SK-N-SH (cell line): ENCODE measurements at regions of chr7 and their contacts with region 1.

Region 1: GRCh38 chr7:155598810-155599210 is 45.7 kb upstream of the RBM33 start:
- DNase-seq: peak; percentile 88
- H3K4me3 ChIP-seq: peak overlapping the region in 1 of 2 experiments; percentile 11; a peak in 1 of 4 replicates
- H3K27ac ChIP-seq: no peak overlapping the region
- H3K4me1 ChIP-seq: peaks cover 0 to 3% of the 10 kb centered on the region in 2 experiments; a peak in 1 of 4 replicates
- H3K27me3 ChIP-seq: peaks cover 27% of the 10 kb centered on the region; the same call in 1 of the 2 replicates
- CTCF ChIP-seq: peak; percentile 100
- EP300 ChIP-seq: no peak
- RAD21 ChIP-seq: peak; percentile 90

Region 2: GRCh38 chr7:155576900-155577508 is 21.8 kb before region 1 on chr7:
- CTCF ChIA-PET with region 1: interaction called, 22 read pairs
- POLR2A ChIA-PET with region 1: no interaction called
- DNase-seq: no peak
- H3K4me3 ChIP-seq: no peak overlapping the region
- H3K27ac ChIP-seq: no peak overlapping the region
- H3K4me1 ChIP-seq: no peaks in the 10 kb centered on the region
- H3K27me3 ChIP-seq: peaks cover 30% of the 10 kb centered on the region; the same call in 1 of the 2 replicates
- CTCF ChIP-seq: no peak
- EP300 ChIP-seq: no peak
- RAD21 ChIP-seq: no peak

Region 3: GRCh38 chr7:155648752-155649339 is 50.0 kb after region 1 on chr7:
- CTCF ChIA-PET with region 1: interaction called, 12 read pairs
- POLR2A ChIA-PET with region 1: no interaction called
- DNase-seq: no peak
- H3K4me3 ChIP-seq: no peak overlapping the region; a peak in 1 of 4 replicates
- H3K27ac ChIP-seq: no peak overlapping the region
- H3K4me1 ChIP-seq: peaks cover 12 to 14% of the 10 kb centered on the region in 2 experiments; a peak in 3 of 4 replicates
- H3K27me3 ChIP-seq: no peaks in the 10 kb centered on the region
- CTCF ChIP-seq: no peak
- EP300 ChIP-seq: no peak
- RAD21 ChIP-seq: no peak

Region 4: GRCh38 chr7:155676052-155676451 is 77.2 kb after region 1 on chr7:
- CTCF ChIA-PET with region 1: interaction called, 22 read pairs
- POLR2A ChIA-PET with region 1: no interaction called
- DNase-seq: no peak
- H3K4me3 ChIP-seq: no peak overlapping the region
- H3K27ac ChIP-seq: no peak overlapping the region
- H3K4me1 ChIP-seq: peaks cover 12% of the 10 kb centered on the region in 2 experiments; a peak in 3 of 4 replicates
- H3K27me3 ChIP-seq: no peaks in the 10 kb centered on the region
- CTCF ChIP-seq: no peak
- EP300 ChIP-seq: no peak
- RAD21 ChIP-seq: no peak

Region 5: GRCh38 chr7:155738652-155739537 is 140.1 kb after region 1 on chr7:
- CTCF ChIA-PET with region 1: interaction called, 470 read pairs
- POLR2A ChIA-PET with region 1: no interaction called
- DNase-seq: peak; percentile 76
- H3K4me3 ChIP-seq: no peak overlapping the region; a peak in 1 of 4 replicates
- H3K27ac ChIP-seq: no peak overlapping the region
- H3K4me1 ChIP-seq: no peaks in the 10 kb centered on the region
- H3K27me3 ChIP-seq: no peaks in the 10 kb centered on the region
- CTCF ChIP-seq: peak; percentile 93
- EP300 ChIP-seq: no peak
- RAD21 ChIP-seq: peak; percentile 97

Region 6: GRCh38 chr7:155778349-155778748 is 179.5 kb after region 1 on chr7:
- CTCF ChIA-PET with region 1: interaction called, 56 read pairs
- POLR2A ChIA-PET with region 1: no interaction called
- DNase-seq: no peak
- H3K4me3 ChIP-seq: no peak overlapping the region
- H3K27ac ChIP-seq: no peak overlapping the region
- H3K4me1 ChIP-seq: peaks cover 0 to 7% of the 10 kb centered on the region in 2 experiments; a peak in 1 of 4 replicates
- H3K27me3 ChIP-seq: no peaks in the 10 kb centered on the region
- CTCF ChIP-seq: no peak
- EP300 ChIP-seq: no peak
- RAD21 ChIP-seq: no peak

Region 7: DNA sequence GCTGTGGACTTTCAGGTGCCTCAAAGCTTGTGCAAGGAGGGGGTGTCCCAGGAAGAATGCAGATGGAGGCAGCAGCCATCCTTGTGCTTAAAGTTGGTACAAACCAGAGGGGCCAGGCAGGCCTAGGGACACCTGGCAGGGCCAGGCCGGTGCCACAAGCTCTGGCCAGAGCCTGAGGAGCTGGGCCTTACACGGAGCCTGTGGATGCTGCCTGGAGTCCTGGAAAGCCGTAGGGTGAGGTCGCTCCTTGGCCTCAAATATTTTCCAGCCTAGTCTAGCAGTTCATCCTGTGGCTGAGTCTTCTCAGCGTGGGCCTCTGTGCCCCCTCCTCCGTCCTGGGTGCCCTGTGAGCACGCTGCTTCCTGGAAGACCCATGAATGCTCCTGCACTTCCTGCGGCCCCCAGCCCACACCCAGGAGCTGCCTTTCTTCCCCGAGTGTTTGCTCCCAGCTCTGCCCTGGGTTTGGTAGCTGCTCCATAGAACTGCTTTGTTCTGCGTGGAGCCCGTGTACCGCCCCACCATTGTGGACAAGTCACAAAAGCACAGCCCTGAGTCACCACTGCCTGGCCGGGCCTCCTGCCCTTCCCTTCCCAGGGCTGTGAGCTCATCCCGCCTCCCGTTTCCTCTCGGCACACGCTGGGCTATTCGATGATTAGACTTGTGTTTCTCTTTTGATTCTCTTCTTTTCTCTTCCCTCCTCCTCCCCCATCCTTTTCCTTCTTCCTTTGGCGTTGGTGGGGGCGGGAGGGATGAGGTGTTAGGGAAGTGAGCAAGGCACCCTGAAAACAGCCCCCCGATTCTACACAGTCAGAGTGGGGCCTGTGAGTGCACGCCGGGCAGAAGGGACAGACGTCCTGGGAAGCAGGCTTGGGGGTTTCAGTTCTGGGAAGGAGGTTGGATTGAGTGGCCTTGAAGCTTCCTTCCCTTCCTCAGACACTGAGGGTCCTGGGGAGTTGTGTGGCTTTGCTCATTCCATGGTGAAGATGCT is 286.7 kb after region 1 on chr7:
- CTCF ChIA-PET with region 1: no interaction called
- POLR2A ChIA-PET with region 1: no interaction called
- DNase-seq: no peak
- H3K4me3 ChIP-seq: 0 out of 4 replicates have a peak overlapping the region, but pooled peaks of 1 of the 2 experiments have one; percentile 12
- H3K27ac ChIP-seq: no peak overlapping the region
- H3K4me1 ChIP-seq: peaks cover 0 to 8% of the 10 kb centered on the region in 2 experiments; a peak in 2 of 4 replicates
- H3K27me3 ChIP-seq: peaks cover 37% of the 10 kb centered on the region; the same call in 1 of the 2 replicates
- CTCF ChIP-seq: no peak
- EP300 ChIP-seq: no peak
- RAD21 ChIP-seq: no peak